Sigmoid colon (tissue), 7 donors: ENCODE measurements at regions of chr7 and their contacts with region 1.

Region 1: DNA sequence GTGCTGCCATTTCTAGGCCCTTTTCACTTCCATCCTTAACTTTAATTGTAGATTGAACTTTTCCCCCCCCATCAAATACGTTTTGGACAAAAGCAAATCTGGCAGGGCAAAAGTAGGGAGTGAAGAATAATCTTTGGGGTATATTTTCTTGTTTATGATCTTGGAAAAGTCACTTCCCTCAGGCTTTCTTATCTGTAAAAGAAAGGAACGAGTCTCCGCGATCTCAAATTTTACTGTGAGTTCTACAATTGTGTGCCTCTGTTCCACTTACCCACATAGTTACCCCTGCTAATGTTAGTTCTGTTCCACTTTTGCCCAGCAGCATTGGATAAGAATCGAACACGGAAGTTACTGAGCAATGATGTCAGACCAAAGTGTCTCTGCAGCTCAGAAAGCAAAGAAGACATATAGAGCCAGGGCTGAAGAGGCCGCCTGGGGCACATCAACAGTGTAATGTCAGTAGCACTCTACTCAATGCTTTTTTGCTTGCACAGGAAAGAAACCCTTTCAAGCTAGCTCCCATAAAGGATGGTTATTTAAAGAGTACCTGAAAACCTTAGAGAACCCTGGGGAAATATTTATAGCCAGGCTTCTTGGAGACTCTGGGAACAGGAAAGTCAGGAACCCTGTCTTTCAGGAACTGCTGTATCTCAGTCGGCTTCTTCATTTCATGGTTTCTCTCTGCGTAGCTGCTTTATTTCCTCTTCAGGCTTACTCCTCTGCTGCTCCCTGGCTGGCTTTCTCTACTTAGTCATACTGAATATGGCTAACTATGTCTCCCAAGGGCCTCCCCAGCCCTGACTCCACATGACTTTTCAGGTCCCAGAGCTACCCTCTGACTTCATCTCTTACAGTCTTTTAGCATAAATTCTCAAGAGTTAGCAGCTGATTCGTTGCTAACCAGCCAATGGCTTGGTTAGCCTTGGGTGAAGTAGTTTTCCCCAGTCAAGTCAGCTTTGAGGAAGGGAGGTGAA is 123.7 kb upstream of the FAM3C start:
- DNase-seq: peak; percentile 70
- H3K4me3 ChIP-seq: no peak overlapping the region
- H3K27ac ChIP-seq: peak overlapping the region in 3 of 4 donors; percentile 47 to 67 (median 51)
- H3K4me1 ChIP-seq: peaks cover 0 to 60% (median 30%) of the 10 kb centered on the region in 4 donors
- H3K27me3 ChIP-seq: no peaks in the 10 kb centered on the region
- CTCF ChIP-seq: no peak
- EP300 ChIP-seq: no peak
- POLR2A ChIP-seq: no peak

Region 2: GRCh38 chr7:120725376-120726039 is 794.3 kb before region 1 on chr7:
- intact Hi-C with region 1: loop called (anchors 10 kb)
- DNase-seq: no peak
- H3K4me3 ChIP-seq: no peak overlapping the region
- H3K27ac ChIP-seq: no peak overlapping the region
- H3K4me1 ChIP-seq: peaks cover 0 to 29% (median 9%) of the 10 kb centered on the region in 4 donors
- H3K27me3 ChIP-seq: no peaks in the 10 kb centered on the region
- CTCF ChIP-seq: peak in 3 of 4 experiments; percentile 29 to 51 (median 35)
- EP300 ChIP-seq: no peak
- POLR2A ChIP-seq: no peak

Region 3: DNA sequence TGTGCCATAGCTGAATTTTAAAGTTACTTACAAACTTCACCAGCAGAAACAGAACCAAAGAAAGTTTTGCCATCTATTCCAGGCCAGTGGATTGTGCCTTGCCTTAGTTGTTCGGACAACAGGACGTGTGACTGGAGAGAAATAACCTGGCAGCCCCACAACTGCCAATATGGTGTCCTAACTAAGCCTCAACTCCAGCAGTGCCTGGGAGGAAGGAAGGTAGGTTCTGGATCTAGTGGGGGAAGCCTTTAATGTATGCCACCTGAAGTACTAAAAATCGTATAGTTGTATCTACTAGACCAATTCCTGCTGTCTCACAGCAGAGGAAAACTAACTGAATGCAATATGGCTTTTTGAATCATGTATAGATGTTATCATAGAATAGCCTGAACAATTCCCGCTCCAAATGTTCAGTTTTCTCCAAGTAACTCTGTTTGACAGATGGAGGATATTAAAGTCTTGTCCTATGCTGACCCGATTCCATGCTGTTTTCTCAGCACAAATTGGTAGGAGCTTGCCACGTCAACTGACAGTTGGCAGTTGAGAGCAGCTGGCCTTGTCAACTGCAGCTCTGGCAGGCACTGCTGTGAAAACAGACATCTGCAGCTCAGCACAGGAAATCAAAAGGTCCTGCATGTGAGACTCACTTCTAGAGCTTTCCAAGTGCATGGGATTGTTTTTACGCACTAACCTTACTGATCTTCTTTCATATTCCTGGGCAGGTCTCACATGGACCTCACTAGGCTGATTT is 275.5 kb before region 1 on chr7:
- intact Hi-C with region 1: no loop called
- DNase-seq: no peak
- H3K4me3 ChIP-seq: no peak overlapping the region
- H3K27ac ChIP-seq: no peak overlapping the region
- H3K4me1 ChIP-seq: no peaks in the 10 kb centered on the region
- H3K27me3 ChIP-seq: no peaks in the 10 kb centered on the region
- CTCF ChIP-seq: no peak
- EP300 ChIP-seq: no peak
- POLR2A ChIP-seq: no peak

Region 4: GRCh38 chr7:121480058-121480457 is 39.8 kb before region 1 on chr7:
- intact Hi-C with region 1: loop called (anchors 5 kb)
- DNase-seq: no peak
- H3K4me3 ChIP-seq: no peak overlapping the region
- H3K27ac ChIP-seq: peak overlapping the region in 2 of 4 donors; percentile 10 to 35
- H3K4me1 ChIP-seq: peaks cover 0 to 28% (median 16%) of the 10 kb centered on the region in 4 donors
- H3K27me3 ChIP-seq: no peaks in the 10 kb centered on the region
- CTCF ChIP-seq: no peak
- EP300 ChIP-seq: no peak
- POLR2A ChIP-seq: no peak